Right cardiac atrium (tissue), 5 donors: ENCODE measurements at regions of chr18 and their contacts with region 1.

Region 1: GRCh38 chr18:25351777-25352628 is at the start of gene ZNF521:
- DNase-seq: peak; percentile 88 to 94 (median 93)
- ATAC-seq: peak; percentile 88 to 91
- H3K4me3 ChIP-seq: peak within 1 kb of the TSS; percentile 100
- H3K27ac ChIP-seq: peak within 1 kb of the TSS; percentile 96
- H3K4me1 ChIP-seq: no peaks in the 10 kb centered on the region
- H3K27me3 ChIP-seq: no peaks in the 10 kb centered on the region
- total RNA-seq, gene ZNF521: 37.3 to 54.5 (median 42.1) TPM

Region 2: DNA sequence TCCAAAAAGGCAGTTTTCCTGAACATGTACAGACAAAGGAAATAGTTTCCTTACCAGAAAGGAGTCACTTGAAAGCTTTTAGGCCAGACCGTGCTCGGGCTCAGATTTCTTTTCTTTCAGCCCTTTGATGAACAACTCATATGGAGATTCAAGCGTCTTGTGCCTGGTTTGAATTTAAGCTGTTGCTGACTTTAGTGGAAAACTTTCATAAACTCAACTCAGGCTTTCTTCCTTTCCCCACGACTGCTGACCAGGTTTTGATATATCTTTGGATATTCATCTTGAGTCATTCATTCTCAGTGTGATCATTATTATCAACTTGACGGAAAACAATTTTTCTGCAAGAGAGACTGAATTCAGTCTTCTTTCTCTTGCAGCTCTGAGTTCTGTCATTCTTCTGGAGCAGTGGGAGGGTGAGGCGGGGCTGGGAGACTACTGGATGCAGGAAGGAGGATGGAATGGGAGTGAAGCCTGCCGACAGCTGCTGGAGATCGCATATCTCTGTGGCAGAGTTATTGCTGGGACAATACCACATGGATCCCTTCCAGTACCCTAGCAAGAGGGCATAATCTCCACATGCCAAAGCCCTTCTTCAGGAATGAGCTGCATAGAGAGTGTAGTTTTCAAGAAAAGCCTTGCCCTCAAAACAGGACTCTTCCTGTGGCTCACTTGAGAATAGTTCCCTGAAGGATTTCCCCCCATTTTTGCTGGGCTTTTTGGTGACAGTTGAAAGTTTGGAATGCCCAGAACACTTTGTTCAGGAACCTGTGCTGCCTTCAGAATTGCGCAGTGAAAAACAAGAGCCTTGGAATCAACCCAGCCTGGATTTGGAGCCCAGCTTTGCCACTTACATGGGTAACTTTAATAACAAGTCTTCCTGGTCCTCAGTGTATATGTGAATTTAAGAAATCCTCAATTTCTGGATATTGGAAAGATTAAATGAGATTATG is 364.4 kb before region 1 on chr18:
- intact Hi-C with region 1: loop called in 1 of 4 experiments (anchors 2 kb)
- DNase-seq: peak; percentile 44 to 79 (median 75)
- ATAC-seq: peak; percentile 72 to 76
- H3K4me3 ChIP-seq: peak overlapping the region; percentile 56
- H3K27ac ChIP-seq: peak overlapping the region; percentile 82
- H3K4me1 ChIP-seq: peaks cover 3% of the 10 kb centered on the region
- H3K27me3 ChIP-seq: no peaks in the 10 kb centered on the region

Region 3: DNA sequence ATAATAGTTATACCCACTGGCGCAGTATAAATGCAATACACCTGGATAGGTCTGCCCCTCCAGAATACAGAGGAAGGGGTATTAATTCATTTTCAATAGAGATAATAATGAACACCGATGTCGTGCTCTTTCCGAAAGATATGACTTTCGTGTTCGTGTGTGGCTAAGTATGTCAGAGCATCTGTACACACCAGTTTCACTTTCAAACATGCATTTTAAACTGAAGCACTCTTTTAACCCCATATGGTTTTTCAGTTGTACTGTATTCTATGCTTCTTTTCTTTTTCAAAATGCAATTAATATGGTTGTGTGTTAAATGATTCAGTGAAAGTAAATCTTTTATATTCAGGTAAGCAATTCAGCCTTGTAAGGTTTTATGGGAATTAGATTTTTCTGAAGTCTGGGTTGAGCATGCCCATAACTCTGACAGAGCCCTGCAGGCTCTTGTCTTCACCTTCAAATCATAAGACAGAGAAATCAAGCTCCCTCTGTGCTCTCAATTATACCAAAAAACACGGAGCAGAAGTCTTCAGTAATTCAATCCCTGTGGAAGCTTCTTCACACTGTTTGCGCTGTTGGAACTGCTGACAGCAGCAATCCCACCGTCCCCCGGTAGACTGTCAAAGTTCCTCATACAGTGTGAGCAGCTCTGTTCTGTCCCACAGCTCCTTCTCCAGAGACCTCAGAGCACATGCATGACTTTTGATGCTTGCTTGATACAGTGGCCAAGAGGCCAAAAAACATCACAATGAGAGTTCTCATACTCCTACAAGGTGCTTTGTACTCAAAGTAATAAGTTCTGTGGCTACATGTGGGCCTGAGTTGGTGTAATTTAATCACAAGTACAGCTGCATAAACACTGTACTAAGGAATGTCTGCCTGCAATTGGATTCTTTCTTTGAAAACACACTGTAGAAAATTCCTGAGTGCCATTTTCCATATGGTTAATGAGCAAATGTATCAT is 186.9 kb before region 1 on chr18:
- intact Hi-C with region 1: loop called in 1 of 4 experiments (anchors 10 kb)
- DNase-seq: peak in 2 of 3 donors; percentile 49 to 54
- ATAC-seq: peak; percentile 77 to 86
- H3K4me3 ChIP-seq: peak overlapping the region; percentile 79
- H3K27ac ChIP-seq: peak overlapping the region; percentile 67
- H3K4me1 ChIP-seq: no peaks in the 10 kb centered on the region
- H3K27me3 ChIP-seq: no peaks in the 10 kb centered on the region

Region 4: DNA sequence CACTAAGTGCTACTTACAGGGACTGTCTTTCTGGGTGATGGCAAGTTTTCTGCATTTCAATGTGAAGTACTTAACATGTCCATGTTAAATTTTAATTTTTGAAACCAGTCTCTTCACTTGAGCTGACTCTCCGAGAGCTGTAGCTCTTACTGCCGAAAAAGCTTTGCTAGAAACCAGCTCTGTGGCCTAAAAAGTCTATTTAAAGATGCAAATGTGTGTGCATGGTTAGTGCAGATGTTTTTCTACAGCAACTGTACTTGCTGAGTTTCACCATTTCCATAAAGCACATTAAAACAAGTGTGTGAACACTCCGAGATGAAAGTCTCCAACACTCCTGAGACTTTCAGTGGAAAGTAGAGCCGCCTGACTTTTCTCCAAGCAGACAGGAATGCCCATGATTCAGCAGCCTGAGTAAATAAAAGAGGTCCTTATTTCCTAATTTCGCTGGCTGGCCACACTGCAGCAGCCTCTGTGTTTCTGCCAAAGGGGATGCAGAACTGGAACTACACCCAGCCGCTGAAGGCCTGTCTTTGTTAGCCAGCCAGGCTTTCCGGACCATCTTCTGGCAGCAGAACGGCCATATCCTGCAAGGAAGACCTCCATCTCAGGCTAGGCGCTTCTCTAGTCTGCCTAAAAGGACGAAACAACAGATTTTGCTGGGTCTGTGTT is 121.2 kb before region 1 on chr18:
- intact Hi-C with region 1: loop called in 2 of 4 experiments (anchors 5 to 10 kb)
- DNase-seq: peak; percentile 85 to 91 (median 87)
- ATAC-seq: peak; percentile 91 to 92
- H3K4me3 ChIP-seq: no peak overlapping the region
- H3K27ac ChIP-seq: peak overlapping the region; percentile 85
- H3K4me1 ChIP-seq: peaks cover 9% of the 10 kb centered on the region
- H3K27me3 ChIP-seq: no peaks in the 10 kb centered on the region

Region 5: GRCh38 chr18:25289001-25289631 is 62.9 kb before region 1 on chr18:
- intact Hi-C with region 1: loop called in 3 of 4 experiments (anchors 5 to 10 kb)
- DNase-seq: peak in 1 of 3 donors; percentile 54
- ATAC-seq: peak in 1 of 2 donors; percentile 10
- H3K4me3 ChIP-seq: no peak overlapping the region
- H3K27ac ChIP-seq: peak overlapping the region; percentile 36
- H3K4me1 ChIP-seq: peaks cover 2% of the 10 kb centered on the region
- H3K27me3 ChIP-seq: no peaks in the 10 kb centered on the region